Activated CD4-positive, alpha-beta memory T cell treated with anti-CD3 and anti-CD28 coated beads for 36 hours (primary cell): ENCODE measurements at regions of chr17 and their contacts with region 1.

Region 1: GRCh38 chr17:35587074-35587971 is at the start of gene AP2B1:
- DNase-seq: peak; percentile 98
- H3K4me3 Mint-ChIP-seq: peak within 1 kb of the TSS; percentile 93
- H3K27ac Mint-ChIP-seq: peak within 1 kb of the TSS; percentile 97
- H3K4me1 Mint-ChIP-seq: peaks cover 23% of the 10 kb centered on the region
- H3K27me3 Mint-ChIP-seq: no peaks in the 10 kb centered on the region
- total RNA-seq, gene AP2B1: 187 to 192 TPM

Region 2: GRCh38 chr17:35141681-35142466 is 445.4 kb before region 1 on chr17 and contains the start of gene NLE1:
- CTCF ChIA-PET with region 1: no interaction called
- POLR2A ChIA-PET with region 1: interaction called, 5 read pairs
- intact Hi-C with region 1: loop called (anchors 1 kb)
- DNase-seq: peak; percentile 93
- H3K4me3 Mint-ChIP-seq: peak within 1 kb of the TSS; percentile 79
- H3K27ac Mint-ChIP-seq: peak within 1 kb of the TSS; percentile 74
- H3K4me1 Mint-ChIP-seq: peaks cover 16% of the 10 kb centered on the region
- H3K27me3 Mint-ChIP-seq: no peaks in the 10 kb centered on the region
- total RNA-seq, gene NLE1: 29.9 to 31.4 TPM

Region 3: DNA sequence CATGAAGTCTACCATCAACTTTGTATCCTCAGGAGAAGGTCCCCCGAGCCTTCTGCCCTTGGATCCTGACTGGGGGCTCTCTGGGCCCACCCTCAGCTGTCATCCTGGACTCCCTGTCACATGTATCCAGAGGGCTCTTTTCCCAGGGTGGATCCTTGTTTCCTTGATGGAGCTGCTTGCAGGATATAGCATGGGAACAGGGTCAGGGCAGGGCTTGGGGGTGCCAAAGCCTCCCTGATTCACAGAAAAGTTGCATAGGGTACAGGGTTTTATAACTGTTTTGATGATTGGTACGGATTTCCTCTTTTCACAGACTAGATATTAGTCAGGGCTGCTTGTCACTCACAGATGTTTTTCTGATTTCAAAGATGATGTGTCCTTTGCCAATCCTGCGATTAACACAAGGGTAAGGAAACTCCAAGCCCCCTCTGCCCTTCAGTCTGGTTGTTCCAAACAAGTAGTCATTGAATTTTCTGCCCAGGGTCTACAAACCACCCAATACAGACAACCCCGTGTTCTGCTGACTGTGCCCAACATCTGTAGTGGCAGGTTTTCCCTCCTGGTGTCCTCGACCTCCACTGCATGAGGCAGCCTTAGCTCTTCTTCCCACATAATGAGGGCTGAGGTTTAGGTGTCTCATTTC is 372.6 kb before region 1 on chr17:
- CTCF ChIA-PET with region 1: no interaction called
- POLR2A ChIA-PET with region 1: interaction called, 3 read pairs
- intact Hi-C with region 1: loop called (anchors 1 kb)
- DNase-seq: peak; percentile 51
- H3K4me3 Mint-ChIP-seq: peak overlapping the region; percentile 49
- H3K27ac Mint-ChIP-seq: peak overlapping the region; percentile 91
- H3K4me1 Mint-ChIP-seq: peaks cover 82% of the 10 kb centered on the region
- H3K27me3 Mint-ChIP-seq: no peaks in the 10 kb centered on the region

Region 4: GRCh38 chr17:35373534-35373983 is 213.8 kb before region 1 on chr17 and contains the start of gene SLFN11:
- CTCF ChIA-PET with region 1: no interaction called
- POLR2A ChIA-PET with region 1: interaction called, 3 read pairs
- intact Hi-C with region 1: loop called (anchors 2 kb)
- DNase-seq: peak; percentile 94
- H3K4me3 Mint-ChIP-seq: peak within 1 kb of the TSS; percentile 96
- H3K27ac Mint-ChIP-seq: peak within 1 kb of the TSS; percentile 97
- H3K4me1 Mint-ChIP-seq: peaks cover 53% of the 10 kb centered on the region
- H3K27me3 Mint-ChIP-seq: no peaks in the 10 kb centered on the region
- total RNA-seq, gene SLFN11: 64.8 to 68.8 TPM

Region 5: DNA sequence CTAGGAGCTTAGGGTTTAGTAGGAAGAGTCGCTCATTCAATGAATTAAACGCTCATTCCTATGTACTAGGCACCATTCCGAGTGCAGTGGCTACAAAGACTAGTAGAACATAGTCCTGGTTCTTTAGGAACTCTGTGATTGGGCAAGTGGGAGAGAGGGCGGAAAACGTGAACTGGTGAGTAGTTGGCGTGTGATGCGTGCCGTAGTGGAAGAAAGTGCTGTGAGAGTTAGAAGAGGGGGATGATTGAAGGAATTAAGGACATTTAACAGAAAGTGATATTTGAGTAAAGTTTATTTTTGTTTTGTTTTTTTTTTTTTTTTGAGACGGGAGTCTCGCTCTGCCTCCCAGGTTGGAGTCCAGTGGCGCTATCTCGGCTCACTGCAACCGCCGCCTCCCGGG is 18.8 kb before region 1 on chr17:
- CTCF ChIA-PET with region 1: no interaction called
- POLR2A ChIA-PET with region 1: interaction called, 3 read pairs
- intact Hi-C with region 1: loop called (anchors 1 kb)
- DNase-seq: peak; percentile 68
- H3K4me3 Mint-ChIP-seq: peak overlapping the region; percentile 92
- H3K27ac Mint-ChIP-seq: peak overlapping the region; percentile 86
- H3K4me1 Mint-ChIP-seq: peaks cover 27% of the 10 kb centered on the region
- H3K27me3 Mint-ChIP-seq: no peaks in the 10 kb centered on the region

Region 6: DNA sequence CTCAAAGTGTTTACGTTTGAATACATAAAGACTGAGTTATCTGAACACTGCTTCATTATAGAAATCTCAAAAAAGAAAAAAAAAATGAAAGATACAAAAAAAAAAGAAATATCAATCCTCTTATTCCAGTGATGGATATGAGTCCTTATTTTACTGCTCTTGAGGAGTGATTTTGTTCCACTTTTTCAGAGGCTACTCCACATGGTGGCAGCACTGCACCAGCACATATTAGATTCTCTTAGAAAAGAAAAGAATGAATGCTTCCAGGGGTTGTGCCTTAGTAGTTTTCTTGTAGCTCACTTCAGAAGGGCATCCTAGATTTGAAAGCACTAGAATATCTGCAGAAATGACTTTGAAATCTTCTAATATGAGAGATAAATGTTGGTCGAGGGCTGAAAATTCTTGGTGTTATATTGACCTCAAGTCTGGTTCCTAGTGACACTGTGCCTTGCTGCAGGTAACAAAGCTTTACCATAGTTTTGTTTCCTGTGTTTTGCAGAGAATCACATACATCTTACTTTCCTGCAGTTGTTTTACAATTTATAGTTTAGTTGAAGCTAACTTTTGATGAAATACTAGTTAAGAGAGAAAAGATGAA is 25.7 kb after region 1 on chr17:
- CTCF ChIA-PET with region 1: interaction called, 10 read pairs
- POLR2A ChIA-PET with region 1: no interaction called
- intact Hi-C with region 1: no loop called
- DNase-seq: peak; percentile 47
- H3K4me3 Mint-ChIP-seq: no peak overlapping the region
- H3K27ac Mint-ChIP-seq: no peak overlapping the region
- H3K4me1 Mint-ChIP-seq: no peaks in the 10 kb centered on the region
- H3K27me3 Mint-ChIP-seq: no peaks in the 10 kb centered on the region

Region 7: DNA sequence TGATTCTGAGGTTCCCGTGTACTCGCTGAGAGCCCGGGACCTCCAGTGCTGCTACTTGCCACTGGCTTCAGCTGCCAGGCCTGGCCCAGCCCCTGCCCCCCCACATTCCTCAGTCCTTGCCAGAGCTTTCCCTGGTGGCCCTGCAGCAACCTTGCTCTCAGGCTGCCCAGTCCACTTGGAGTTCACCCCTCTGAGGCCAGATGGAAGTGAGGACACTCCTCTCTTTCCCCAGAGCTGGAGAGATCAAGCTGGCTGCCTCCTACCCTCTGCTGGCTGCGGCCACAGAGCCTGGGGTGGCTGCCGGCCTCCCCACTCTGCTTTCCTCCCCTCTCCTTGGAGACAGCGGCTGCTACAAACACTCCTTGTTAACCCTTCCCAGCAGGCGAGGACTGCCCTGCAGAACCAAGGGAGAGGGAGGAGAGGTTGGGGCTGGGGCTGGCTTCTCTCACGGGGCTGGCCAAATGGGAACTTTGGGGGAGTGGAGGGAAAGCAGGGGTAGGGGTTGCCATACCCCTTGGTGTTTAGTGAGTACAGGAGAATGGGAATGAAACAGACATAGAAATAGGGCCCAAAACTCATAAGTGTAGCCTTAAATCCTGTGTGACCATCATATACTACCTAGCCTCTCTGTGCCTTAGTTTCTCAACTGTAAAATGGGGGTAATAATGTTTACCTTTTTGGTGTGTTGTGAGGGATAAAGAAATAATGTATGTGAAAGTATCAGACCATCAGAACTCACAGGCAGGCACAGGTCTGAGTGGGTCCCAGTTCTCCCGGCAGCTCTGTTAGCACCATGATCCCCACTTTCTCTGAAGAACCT is 165.8 kb after region 1 on chr17 and contains the start of gene GAS2L2:
- CTCF ChIA-PET with region 1: no interaction called
- POLR2A ChIA-PET with region 1: no interaction called
- intact Hi-C with region 1: no loop called
- DNase-seq: no peak
- H3K4me3 Mint-ChIP-seq: no peak within 1 kb of the TSS
- H3K27ac Mint-ChIP-seq: no peak within 1 kb of the TSS
- H3K4me1 Mint-ChIP-seq: peaks cover 5% of the 10 kb centered on the region
- H3K27me3 Mint-ChIP-seq: peaks cover 36% of the 10 kb centered on the region
- total RNA-seq, gene GAS2L2: not detected